Activated CD8-positive, alpha-beta T cell treated with anti-CD3 and anti-CD28 coated beads for 36 hours (primary cell): ENCODE measurements at regions of chr9 and their contacts with region 1.

Region 1: DNA sequence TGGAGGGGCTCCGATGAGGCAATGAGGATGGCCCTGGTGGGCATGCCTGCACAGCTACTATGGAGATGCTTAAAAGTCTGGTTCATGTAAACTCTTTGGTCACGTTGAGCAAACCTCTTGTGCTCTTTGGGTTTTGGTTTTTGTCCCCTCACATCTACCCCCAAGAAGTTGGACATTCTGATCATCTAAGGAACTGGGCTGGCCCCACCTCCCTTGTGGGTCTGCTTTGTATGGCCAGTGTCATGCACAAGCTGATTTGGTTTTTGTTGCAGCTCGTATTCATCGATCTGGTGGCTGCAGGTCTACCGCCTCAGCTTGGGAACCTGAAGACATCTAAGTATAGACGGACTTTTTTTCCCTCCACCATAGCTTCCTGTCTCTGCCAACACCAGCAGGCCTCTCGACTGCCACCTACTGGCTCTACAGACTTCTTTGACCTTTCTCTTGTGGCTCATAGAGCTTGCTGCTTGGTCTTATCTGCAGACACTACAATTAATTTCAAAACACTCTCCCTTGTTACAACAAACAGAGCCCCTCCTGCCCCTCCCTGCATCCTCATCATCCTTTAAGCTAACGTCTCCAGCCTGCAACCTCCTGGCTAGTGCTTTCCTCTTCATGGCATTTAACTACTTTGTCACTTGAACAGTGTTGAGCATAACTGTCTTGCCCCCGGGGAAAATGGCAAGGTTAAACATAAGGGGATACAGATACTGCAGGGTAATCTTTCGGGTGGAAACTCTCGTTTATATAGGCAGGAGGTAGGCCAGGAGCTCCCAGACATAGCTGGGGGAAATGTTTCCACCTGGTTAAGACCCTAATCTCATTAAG is 34.5 kb downstream of the TSTD2 start:
- DNase-seq: peak; percentile 88
- ATAC-seq: peak; percentile 98
- H3K4me3 Mint-ChIP-seq: no peak overlapping the region
- H3K27ac Mint-ChIP-seq: no peak overlapping the region
- H3K4me1 Mint-ChIP-seq: peaks cover 5% of the 10 kb centered on the region
- H3K27me3 Mint-ChIP-seq: no peaks in the 10 kb centered on the region
- CTCF ChIP-seq: peak; percentile 78

Region 2: DNA sequence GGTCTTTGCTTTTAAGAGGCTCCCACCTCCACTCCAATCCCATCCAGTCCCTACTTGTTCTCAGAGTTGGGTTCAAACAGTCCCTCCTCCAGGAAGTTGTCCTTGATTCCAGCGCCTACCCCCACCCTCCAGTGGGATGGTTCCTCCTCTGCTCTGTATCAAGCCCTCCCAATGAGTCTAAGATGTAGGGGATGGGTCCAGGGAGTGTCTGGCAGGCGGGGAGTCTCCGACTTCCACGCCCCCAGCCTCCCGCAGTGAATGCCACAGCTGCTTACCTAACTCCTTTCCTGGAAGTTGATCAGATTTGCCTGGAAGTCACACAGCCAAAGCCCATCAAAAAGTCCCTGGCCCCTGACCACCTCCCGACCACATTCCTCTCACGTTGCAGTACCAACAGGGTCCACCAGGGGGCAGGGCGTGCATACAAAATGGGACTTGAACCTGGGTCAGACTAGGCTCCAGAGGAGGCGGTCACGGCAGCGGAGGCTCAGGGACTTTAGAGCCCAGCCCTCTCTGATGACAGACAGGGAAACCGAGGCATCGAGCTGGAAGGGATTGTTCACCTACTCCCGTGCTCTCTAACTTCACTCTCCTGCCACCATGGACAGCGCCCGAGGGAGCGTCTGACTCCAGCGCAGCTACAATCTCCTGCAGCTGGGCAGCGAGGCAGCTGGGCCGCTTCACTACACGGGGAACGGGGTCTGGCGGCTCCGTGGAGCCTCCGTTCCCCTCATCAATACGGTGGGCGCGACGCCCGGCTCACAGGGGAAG is 211.8 kb before region 1 on chr9:
- CTCF ChIA-PET with region 1: interaction called, 13 read pairs
- POLR2A ChIA-PET with region 1: no interaction called
- intact Hi-C with region 1: loop called (anchors 2 kb)
- DNase-seq: peak; percentile 87
- ATAC-seq: peak; percentile 68
- H3K4me3 Mint-ChIP-seq: no peak overlapping the region
- H3K27ac Mint-ChIP-seq: no peak overlapping the region
- H3K4me1 Mint-ChIP-seq: peaks cover 12% of the 10 kb centered on the region
- H3K27me3 Mint-ChIP-seq: peaks cover 7% of the 10 kb centered on the region
- CTCF ChIP-seq: peak; percentile 98

Region 3: GRCh38 chr9:97440160-97440559 is 158.5 kb before region 1 on chr9:
- CTCF ChIA-PET with region 1: interaction called, 10 read pairs
- POLR2A ChIA-PET with region 1: no interaction called
- intact Hi-C with region 1: no loop called
- DNase-seq: no peak
- ATAC-seq: no peak
- H3K4me3 Mint-ChIP-seq: no peak overlapping the region
- H3K27ac Mint-ChIP-seq: no peak overlapping the region
- H3K4me1 Mint-ChIP-seq: no peaks in the 10 kb centered on the region
- H3K27me3 Mint-ChIP-seq: no peaks in the 10 kb centered on the region
- CTCF ChIP-seq: no peak

Region 4: GRCh38 chr9:97487107-97487506 is 111.6 kb before region 1 on chr9:
- CTCF ChIA-PET with region 1: interaction called, 11 read pairs
- POLR2A ChIA-PET with region 1: interaction called, 3 read pairs
- intact Hi-C with region 1: no loop called
- DNase-seq: no peak
- ATAC-seq: no peak
- H3K4me3 Mint-ChIP-seq: no peak overlapping the region
- H3K27ac Mint-ChIP-seq: no peak overlapping the region
- H3K4me1 Mint-ChIP-seq: no peaks in the 10 kb centered on the region
- H3K27me3 Mint-ChIP-seq: no peaks in the 10 kb centered on the region
- CTCF ChIP-seq: peak; percentile 21

Region 5: DNA sequence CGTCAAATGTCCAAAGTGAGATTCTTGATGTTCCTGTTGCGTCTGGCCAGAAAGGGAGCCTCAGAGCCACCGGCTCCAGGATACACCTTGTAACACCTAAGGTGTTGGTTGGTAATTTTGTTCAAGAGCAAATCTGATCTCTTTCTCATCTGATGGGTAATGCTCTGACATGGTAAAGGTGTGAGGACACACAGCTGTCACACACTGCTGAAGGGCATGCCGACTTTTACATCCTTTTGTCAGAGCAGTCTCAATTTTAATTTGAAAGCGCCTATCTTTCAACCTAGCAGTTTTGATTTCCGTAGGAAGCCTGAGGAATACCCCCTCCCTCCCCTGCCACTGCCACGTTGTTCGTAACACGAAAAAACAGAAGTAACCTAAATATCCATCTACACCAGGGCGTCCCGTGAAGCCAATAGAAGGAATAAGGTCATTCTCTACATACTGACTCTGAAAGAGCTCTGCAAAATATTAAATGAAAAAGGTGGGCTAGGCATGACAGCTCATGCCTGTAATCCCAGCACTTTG is 22.9 kb before region 1 on chr9:
- CTCF ChIA-PET with region 1: interaction called, 15 read pairs
- POLR2A ChIA-PET with region 1: no interaction called
- intact Hi-C with region 1: no loop called
- DNase-seq: no peak
- ATAC-seq: peak; percentile 30
- H3K4me3 Mint-ChIP-seq: peak overlapping the region; percentile 82
- H3K27ac Mint-ChIP-seq: no peak overlapping the region
- H3K4me1 Mint-ChIP-seq: peaks cover 11% of the 10 kb centered on the region
- H3K27me3 Mint-ChIP-seq: peaks cover 2% of the 10 kb centered on the region
- CTCF ChIP-seq: no peak

Region 6: DNA sequence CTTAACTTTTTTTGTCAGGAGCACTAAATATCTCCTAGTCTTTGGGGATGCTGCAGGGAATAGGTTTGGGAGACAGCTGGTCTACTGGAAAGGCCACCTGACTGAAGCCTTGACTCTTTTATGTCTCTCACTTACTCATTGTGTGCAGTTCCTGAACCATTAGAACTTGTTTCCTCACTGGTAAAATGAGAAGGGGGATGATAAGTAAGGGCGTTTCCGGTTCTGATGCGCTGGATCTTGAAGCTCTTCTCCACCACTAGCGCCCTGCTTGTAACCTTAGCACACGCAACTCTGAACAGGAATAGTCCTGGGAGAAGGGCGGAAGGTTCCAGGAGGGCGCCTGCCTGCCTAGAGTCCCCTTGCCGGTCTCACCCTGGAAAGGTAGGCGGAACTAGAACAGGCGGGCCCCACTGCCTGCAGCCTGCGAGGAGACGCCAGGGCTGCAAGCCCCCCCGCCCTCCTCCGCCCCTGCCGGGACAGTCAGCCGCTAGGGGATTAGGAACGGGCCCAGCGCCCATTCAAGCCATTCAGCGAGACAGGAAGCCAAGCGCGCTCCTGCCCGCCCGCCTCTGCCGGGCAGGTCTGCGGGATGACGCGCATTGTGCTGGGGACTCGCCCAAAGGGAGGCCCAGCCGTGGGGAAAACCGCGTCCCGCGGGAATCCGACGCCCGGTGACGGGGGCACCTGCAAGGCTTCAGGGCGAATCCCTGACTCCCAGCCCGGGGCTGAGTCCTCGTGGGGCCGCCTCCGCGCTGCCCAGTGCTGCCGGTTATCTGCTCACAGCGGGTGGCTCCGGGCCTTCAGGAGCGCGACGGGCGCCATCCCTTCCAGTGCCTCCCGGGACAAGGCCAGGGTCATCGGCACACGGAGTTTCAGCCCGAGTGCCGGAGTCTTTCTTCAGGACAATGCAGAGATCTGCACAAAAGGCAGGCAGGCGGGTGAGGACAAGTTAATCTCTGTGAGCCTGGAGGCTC is 142.5 kb after region 1 on chr9:
- CTCF ChIA-PET with region 1: no interaction called
- POLR2A ChIA-PET with region 1: no interaction called
- intact Hi-C with region 1: no loop called
- DNase-seq: peak; percentile 59
- ATAC-seq: peak; percentile 81
- H3K4me3 Mint-ChIP-seq: peak overlapping the region; percentile 52
- H3K27ac Mint-ChIP-seq: no peak overlapping the region
- H3K4me1 Mint-ChIP-seq: peaks cover 6% of the 10 kb centered on the region
- H3K27me3 Mint-ChIP-seq: peaks cover 51% of the 10 kb centered on the region
- CTCF ChIP-seq: no peak